ENCODE measurements at regions of chr20 and their contacts with region 1.

Region 1: GRCh38 chr20:48523212-48523941 is 304.4 kb downstream of the PREX1 start:
- DNase-seq: no peak
- H3K4me3 ChIP-seq: no peak overlapping the region
- H3K27ac ChIP-seq: no peak overlapping the region
- H3K4me1 ChIP-seq: no peaks in the 10 kb centered on the region
- H3K27me3 ChIP-seq: no peaks in the 10 kb centered on the region
- CTCF ChIP-seq: no peak
- EP300 ChIP-seq: no peak
- POLR2A ChIP-seq: no peak

Region 2: GRCh38 chr20:47886460-47887041 is 636.8 kb before region 1 on chr20:
- intact Hi-C with region 1: loop called in 3 of 4 experiments (anchors 5 kb)
- DNase-seq: no peak
- H3K4me3 ChIP-seq: no peak overlapping the region
- H3K27ac ChIP-seq: no peak overlapping the region
- H3K4me1 ChIP-seq: no peaks in the 10 kb centered on the region
- H3K27me3 ChIP-seq: no peaks in the 10 kb centered on the region
- CTCF ChIP-seq: no peak
- EP300 ChIP-seq: no peak
- POLR2A ChIP-seq: no peak

Measured in ovary (tissue), 10 donors.